Activated CD4-positive, alpha-beta memory T cell treated with anti-CD3 and anti-CD28 coated beads for 36 hours (primary cell): ENCODE measurements at regions of chr5 and their contacts with region 1.

Region 1: GRCh38 chr5:96614110-96614691 is 48.0 kb upstream of the CAST start:
- DNase-seq: peak; percentile 46
- H3K4me3 Mint-ChIP-seq: no peak overlapping the region
- H3K27ac Mint-ChIP-seq: no peak overlapping the region
- H3K4me1 Mint-ChIP-seq: peaks cover 5% of the 10 kb centered on the region
- H3K27me3 Mint-ChIP-seq: no peaks in the 10 kb centered on the region

Region 2: DNA sequence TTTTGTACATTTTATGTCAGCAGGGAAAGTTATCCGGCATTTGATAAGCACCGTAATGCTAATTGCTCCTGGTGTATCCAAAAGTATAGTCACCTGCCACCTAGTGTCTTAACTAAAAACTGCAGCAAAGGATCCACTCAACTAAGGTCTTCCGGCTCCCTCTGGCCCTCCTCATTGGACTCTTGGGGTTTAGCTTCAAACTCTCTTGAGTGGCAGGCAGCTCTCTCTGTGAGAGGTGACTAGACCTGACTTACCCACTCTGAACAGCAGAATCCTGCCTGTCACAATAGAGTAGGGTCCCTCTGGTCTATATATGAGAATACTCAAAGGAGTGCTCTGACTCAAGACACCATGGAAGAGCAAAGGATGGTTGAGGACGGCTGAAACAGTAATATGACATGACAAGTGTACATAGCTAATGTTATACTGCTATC is 12.4 kb before region 1 on chr5:
- CTCF ChIA-PET with region 1: interaction called, 40 read pairs
- POLR2A ChIA-PET with region 1: no interaction called
- intact Hi-C with region 1: no loop called
- DNase-seq: peak; percentile 43
- H3K4me3 Mint-ChIP-seq: no peak overlapping the region
- H3K27ac Mint-ChIP-seq: no peak overlapping the region
- H3K4me1 Mint-ChIP-seq: peaks cover 13% of the 10 kb centered on the region
- H3K27me3 Mint-ChIP-seq: peaks cover 2% of the 10 kb centered on the region

Region 3: GRCh38 chr5:96652769-96653454 is 38.7 kb after region 1 on chr5:
- CTCF ChIA-PET with region 1: interaction called, 10 read pairs
- POLR2A ChIA-PET with region 1: no interaction called
- intact Hi-C with region 1: no loop called
- DNase-seq: no peak
- H3K4me3 Mint-ChIP-seq: no peak overlapping the region
- H3K27ac Mint-ChIP-seq: no peak overlapping the region
- H3K4me1 Mint-ChIP-seq: peaks cover 29% of the 10 kb centered on the region
- H3K27me3 Mint-ChIP-seq: peaks cover 30% of the 10 kb centered on the region

Region 4: DNA sequence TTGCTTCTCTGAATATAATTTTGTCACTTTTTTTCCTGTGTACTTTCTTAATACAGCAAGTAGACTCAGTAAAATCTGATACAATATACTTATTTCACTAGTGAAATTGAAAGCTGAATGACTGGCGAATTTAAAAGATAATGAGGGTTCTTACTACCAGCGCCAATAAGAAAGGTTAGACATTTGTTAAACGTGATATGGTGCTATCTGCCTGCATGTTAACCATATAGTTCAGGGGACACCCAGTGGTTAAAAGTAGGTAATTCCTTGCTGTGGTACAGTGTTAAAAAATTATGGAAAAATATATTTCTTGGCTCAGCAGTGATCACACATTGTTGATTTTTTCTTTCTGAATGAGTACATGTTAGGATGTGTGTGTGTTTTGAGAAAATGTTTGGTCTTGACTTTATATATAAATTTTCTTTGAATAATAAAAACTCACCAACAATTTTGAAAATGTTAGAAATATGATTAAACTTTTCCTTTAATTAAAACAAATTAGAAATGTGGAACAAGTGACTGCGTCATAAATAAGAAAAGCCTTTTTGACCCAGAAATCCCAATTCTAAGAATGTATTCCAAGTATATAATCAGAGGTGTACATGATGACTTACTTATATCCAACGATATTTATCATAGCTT is 73.7 kb after region 1 on chr5:
- CTCF ChIA-PET with region 1: interaction called, 40 read pairs
- POLR2A ChIA-PET with region 1: no interaction called
- intact Hi-C with region 1: loop called (anchors 1 kb)
- DNase-seq: no peak
- H3K4me3 Mint-ChIP-seq: no peak overlapping the region
- H3K27ac Mint-ChIP-seq: no peak overlapping the region
- H3K4me1 Mint-ChIP-seq: peaks cover 30% of the 10 kb centered on the region
- H3K27me3 Mint-ChIP-seq: no peaks in the 10 kb centered on the region

Region 5: GRCh38 chr5:96702503-96703383 is 88.5 kb after region 1 on chr5:
- CTCF ChIA-PET with region 1: interaction called, 11 read pairs
- POLR2A ChIA-PET with region 1: no interaction called
- intact Hi-C with region 1: no loop called
- DNase-seq: peak; percentile 92
- H3K4me3 Mint-ChIP-seq: peak overlapping the region; percentile 84
- H3K27ac Mint-ChIP-seq: peak overlapping the region; percentile 85
- H3K4me1 Mint-ChIP-seq: peaks cover 52% of the 10 kb centered on the region
- H3K27me3 Mint-ChIP-seq: no peaks in the 10 kb centered on the region

Region 6: GRCh38 chr5:96729156-96729555 is 115.0 kb after region 1 on chr5:
- CTCF ChIA-PET with region 1: interaction called, 22 read pairs
- POLR2A ChIA-PET with region 1: no interaction called
- intact Hi-C with region 1: loop called (anchors 2 kb)
- DNase-seq: no peak
- H3K4me3 Mint-ChIP-seq: no peak overlapping the region
- H3K27ac Mint-ChIP-seq: no peak overlapping the region
- H3K4me1 Mint-ChIP-seq: peaks cover 4% of the 10 kb centered on the region
- H3K27me3 Mint-ChIP-seq: no peaks in the 10 kb centered on the region

Region 7: GRCh38 chr5:97162045-97162444 is 547.8 kb after region 1 on chr5:
- CTCF ChIA-PET with region 1: interaction called, 14 read pairs
- POLR2A ChIA-PET with region 1: no interaction called
- intact Hi-C with region 1: loop called (anchors 1 kb)
- DNase-seq: peak; percentile 64
- H3K4me3 Mint-ChIP-seq: no peak overlapping the region
- H3K27ac Mint-ChIP-seq: no peak overlapping the region
- H3K4me1 Mint-ChIP-seq: peaks cover 17% of the 10 kb centered on the region
- H3K27me3 Mint-ChIP-seq: no peaks in the 10 kb centered on the region